ENCODE measurements at regions of chr20 and their contacts with region 1.

Region 1: DNA sequence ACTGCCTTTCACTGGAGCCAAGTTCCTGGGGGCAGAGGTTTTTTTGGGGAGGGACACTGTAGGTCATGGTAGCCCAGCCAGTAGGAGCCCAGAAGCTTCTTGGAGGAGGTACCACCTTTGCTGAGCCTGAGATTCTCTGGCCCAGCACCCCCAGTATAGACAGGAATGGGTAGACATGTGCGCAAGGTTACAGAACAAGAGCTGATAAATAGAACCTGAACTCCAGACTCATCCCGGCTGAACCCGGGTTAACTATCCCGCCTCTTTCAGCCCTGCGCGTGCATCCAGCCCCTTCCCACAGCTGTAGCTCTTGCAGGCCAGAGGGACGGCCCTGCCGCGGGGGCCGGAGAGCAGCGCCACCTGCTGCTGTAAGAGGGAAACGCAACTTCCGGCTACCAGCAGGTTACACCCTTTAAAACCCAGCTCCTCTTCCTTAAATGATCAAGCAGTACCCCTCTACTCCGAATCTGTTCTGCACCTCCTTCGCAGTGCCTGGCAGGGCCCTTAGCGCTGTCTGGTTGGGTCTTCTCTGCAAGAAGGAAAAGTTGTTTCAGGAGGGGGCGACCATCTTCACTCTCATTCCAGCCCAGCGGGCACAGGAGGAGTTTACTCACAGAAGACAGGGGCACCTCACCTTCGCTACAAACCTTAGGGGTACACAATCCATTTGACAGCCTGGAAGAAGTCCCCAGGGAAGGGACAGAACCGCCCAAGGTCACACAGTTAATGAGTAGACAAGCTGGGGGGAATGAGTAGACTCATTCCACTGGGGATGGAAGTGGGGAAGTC is 7.5 kb downstream of the SRXN1 start:
- DNase-seq: peak; percentile 30 to 69
- H3K4me3 ChIP-seq: no peak overlapping the region
- H3K27ac ChIP-seq: no peak overlapping the region
- H3K4me1 ChIP-seq: no peaks in the 10 kb centered on the region
- H3K27me3 ChIP-seq: no peaks in the 10 kb centered on the region
- CTCF ChIP-seq: peak; percentile 58 to 92 (median 73)
- POLR2A ChIP-seq: no peak

Region 2: GRCh38 chr20:561437-562231 is 83.9 kb before region 1 on chr20:
- intact Hi-C with region 1: loop called (anchors 10 kb)
- DNase-seq: peak; percentile 22 to 61
- H3K4me3 ChIP-seq: no peak overlapping the region
- H3K27ac ChIP-seq: no peak overlapping the region
- H3K4me1 ChIP-seq: no peaks in the 10 kb centered on the region
- H3K27me3 ChIP-seq: peaks cover 0 to 12% of the 10 kb centered on the region in 2 donors
- CTCF ChIP-seq: peak; percentile 82 to 96 (median 83)
- POLR2A ChIP-seq: no peak

Measured in breast epithelium (tissue), 4 donors.